ENCODE measurements at regions of chr5 and their contacts with region 1.

Region 1: DNA sequence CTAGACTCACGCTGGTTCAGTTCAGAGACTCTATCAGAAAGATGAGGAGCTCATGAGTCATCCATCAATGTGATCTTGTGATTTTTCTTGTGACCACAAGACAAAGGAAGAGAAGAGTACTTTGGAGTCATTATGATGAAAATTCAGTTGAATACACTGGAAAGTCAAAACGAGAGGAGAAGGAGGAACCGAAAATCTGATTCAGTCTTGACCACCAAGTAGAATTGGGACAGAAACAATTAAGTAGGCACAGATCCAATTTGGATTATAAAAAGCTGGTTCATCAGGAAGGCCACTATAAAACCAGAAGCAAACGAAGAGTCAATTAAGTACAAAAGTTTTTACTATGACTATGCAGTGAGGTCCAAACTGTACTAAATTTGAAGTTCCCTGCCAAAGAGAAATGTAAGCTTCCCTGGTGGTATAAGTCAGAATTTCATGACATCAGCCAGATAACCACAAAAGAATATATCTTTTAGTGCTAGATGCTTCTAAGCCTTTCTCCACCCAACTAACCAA is 90.9 kb downstream of the THBS4 start:
- DNase-seq: peak; percentile 93
- ATAC-seq: peak; percentile 81
- H3K4me3 ChIP-seq: peak overlapping the region; percentile 32; the same call in 1 of the 2 replicates
- H3K27ac ChIP-seq: peak overlapping the region; percentile 74
- H3K4me1 ChIP-seq: peaks cover 28% of the 10 kb centered on the region
- H3K27me3 ChIP-seq: no peaks in the 10 kb centered on the region
- CTCF ChIP-seq: no peak; a peak in 1 of 6 replicates
- EP300 ChIP-seq: peak; percentile 97 to 99; a peak in 3 of 4 replicates
- POLR2A ChIP-seq: no peak
- RAD21 ChIP-seq: no peak

Region 2: GRCh38 chr5:80141147-80141671 is 15.2 kb after region 1 on chr5:
- CTCF ChIA-PET with region 1: interaction called, 26 read pairs
- POLR2A ChIA-PET with region 1: interaction called, 11 read pairs
- RAD21 ChIA-PET with region 1: interaction called, 41 read pairs
- SMC1A ChIA-PET with region 1: interaction called, 56 read pairs
- in situ Hi-C with region 1: no loop called
- intact Hi-C with region 1: loop called (anchors 1 kb)
- DNase-seq: no peak
- ATAC-seq: peak; percentile 32
- H3K4me3 ChIP-seq: no peak overlapping the region
- H3K27ac ChIP-seq: no peak overlapping the region
- H3K4me1 ChIP-seq: peaks cover 32% of the 10 kb centered on the region
- H3K27me3 ChIP-seq: no peaks in the 10 kb centered on the region
- CTCF ChIP-seq: no peak
- EP300 ChIP-seq: no peak
- POLR2A ChIP-seq: no peak
- RAD21 ChIP-seq: no peak

Region 3: GRCh38 chr5:80191991-80192398 is 66.0 kb after region 1 on chr5:
- CTCF ChIA-PET with region 1: no interaction called
- POLR2A ChIA-PET with region 1: interaction called, 3 read pairs
- RAD21 ChIA-PET with region 1: interaction called, 3 read pairs
- SMC1A ChIA-PET with region 1: interaction called, 14 read pairs
- in situ Hi-C with region 1: no loop called
- intact Hi-C with region 1: no loop called
- DNase-seq: no peak
- ATAC-seq: peak; percentile 24
- H3K4me3 ChIP-seq: no peak overlapping the region
- H3K27ac ChIP-seq: no peak overlapping the region
- H3K4me1 ChIP-seq: peaks cover 18% of the 10 kb centered on the region; the same call in 1 of the 2 replicates
- H3K27me3 ChIP-seq: no peaks in the 10 kb centered on the region
- CTCF ChIP-seq: no peak
- EP300 ChIP-seq: no peak
- POLR2A ChIP-seq: no peak
- RAD21 ChIP-seq: no peak

Region 4: GRCh38 chr5:80246001-80246758 is 120.2 kb after region 1 on chr5:
- CTCF ChIA-PET with region 1: interaction called, 6 read pairs
- POLR2A ChIA-PET with region 1: interaction called, 14 read pairs
- RAD21 ChIA-PET with region 1: interaction called, 8 read pairs
- SMC1A ChIA-PET with region 1: interaction called, 16 read pairs
- in situ Hi-C with region 1: no loop called
- intact Hi-C with region 1: no loop called
- DNase-seq: no peak
- ATAC-seq: peak; percentile 25
- H3K4me3 ChIP-seq: no peak overlapping the region
- H3K27ac ChIP-seq: no peak overlapping the region; the same call in 1 of the 2 replicates
- H3K4me1 ChIP-seq: peaks cover 26% of the 10 kb centered on the region
- H3K27me3 ChIP-seq: no peaks in the 10 kb centered on the region
- CTCF ChIP-seq: no peak
- EP300 ChIP-seq: no peak
- POLR2A ChIP-seq: no peak
- RAD21 ChIP-seq: no peak

Region 5: GRCh38 chr5:80308526-80308925 is 182.5 kb after region 1 on chr5:
- CTCF ChIA-PET with region 1: interaction called, 3 read pairs
- POLR2A ChIA-PET with region 1: no interaction called
- RAD21 ChIA-PET with region 1: interaction called, 5 read pairs
- SMC1A ChIA-PET with region 1: interaction called, 10 read pairs
- in situ Hi-C with region 1: no loop called
- intact Hi-C with region 1: no loop called
- DNase-seq: no peak
- ATAC-seq: no peak
- H3K4me3 ChIP-seq: no peak overlapping the region
- H3K27ac ChIP-seq: no peak overlapping the region
- H3K4me1 ChIP-seq: no peaks in the 10 kb centered on the region
- H3K27me3 ChIP-seq: no peaks in the 10 kb centered on the region; a peak in 1 of 4 replicates
- CTCF ChIP-seq: no peak
- EP300 ChIP-seq: no peak
- POLR2A ChIP-seq: no peak
- RAD21 ChIP-seq: no peak